Activated B cell treated with CpG ODN at 0.5 μM for 24 hours (primary cell): ENCODE measurements at regions of chr15 and their contacts with region 1.

Region 1: GRCh38 chr15:79184465-79184892 is 93.9 kb upstream of the RASGRF1 start:
- DNase-seq: peak; percentile 51
- ATAC-seq: peak; percentile 56
- H3K4me3 Mint-ChIP-seq: no peak overlapping the region
- H3K27ac Mint-ChIP-seq: no peak overlapping the region
- H3K4me1 Mint-ChIP-seq: no peaks in the 10 kb centered on the region
- H3K27me3 Mint-ChIP-seq: peaks cover 9% of the 10 kb centered on the region
- CTCF ChIP-seq: peak; percentile 90

Region 2: DNA sequence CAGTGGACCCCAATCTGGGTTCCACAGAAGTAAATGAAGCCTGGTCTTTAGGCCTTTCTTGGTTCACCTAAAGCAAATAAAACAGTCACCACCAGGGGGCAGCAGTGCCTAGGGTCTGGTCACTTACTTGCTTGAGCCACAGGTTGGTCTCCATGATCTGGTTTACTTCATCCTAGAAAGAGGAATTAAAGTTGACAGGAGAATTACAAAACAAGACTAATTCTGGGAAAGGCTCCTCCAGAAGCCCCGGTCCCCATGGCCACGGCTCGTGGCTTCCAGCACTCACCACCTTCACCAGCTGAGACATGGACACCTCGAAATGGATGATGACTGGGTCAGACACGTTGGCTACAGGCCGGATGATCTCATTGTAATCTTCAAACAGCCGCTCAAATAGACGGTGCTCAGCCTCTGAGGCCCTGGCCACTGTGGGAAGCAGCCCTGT is 566.0 kb before region 1 on chr15:
- CTCF ChIA-PET with region 1: no interaction called
- POLR2A ChIA-PET with region 1: no interaction called
- intact Hi-C with region 1: loop called (anchors 1 kb)
- DNase-seq: peak; percentile 59
- ATAC-seq: peak; percentile 67
- H3K4me3 Mint-ChIP-seq: no peak overlapping the region
- H3K27ac Mint-ChIP-seq: no peak overlapping the region
- H3K4me1 Mint-ChIP-seq: peaks cover 5% of the 10 kb centered on the region
- H3K27me3 Mint-ChIP-seq: peaks cover 34% of the 10 kb centered on the region
- CTCF ChIP-seq: peak; percentile 45

Region 3: GRCh38 chr15:78761891-78762385 is 422.5 kb before region 1 on chr15:
- CTCF ChIA-PET with region 1: interaction called, 3 read pairs
- POLR2A ChIA-PET with region 1: no interaction called
- intact Hi-C with region 1: loop called (anchors 5 kb)
- DNase-seq: no peak
- ATAC-seq: no peak
- H3K4me3 Mint-ChIP-seq: peak overlapping the region; percentile 46
- H3K27ac Mint-ChIP-seq: peak overlapping the region; percentile 77
- H3K4me1 Mint-ChIP-seq: peaks cover 62% of the 10 kb centered on the region
- H3K27me3 Mint-ChIP-seq: no peaks in the 10 kb centered on the region
- CTCF ChIP-seq: no peak

Region 4: DNA sequence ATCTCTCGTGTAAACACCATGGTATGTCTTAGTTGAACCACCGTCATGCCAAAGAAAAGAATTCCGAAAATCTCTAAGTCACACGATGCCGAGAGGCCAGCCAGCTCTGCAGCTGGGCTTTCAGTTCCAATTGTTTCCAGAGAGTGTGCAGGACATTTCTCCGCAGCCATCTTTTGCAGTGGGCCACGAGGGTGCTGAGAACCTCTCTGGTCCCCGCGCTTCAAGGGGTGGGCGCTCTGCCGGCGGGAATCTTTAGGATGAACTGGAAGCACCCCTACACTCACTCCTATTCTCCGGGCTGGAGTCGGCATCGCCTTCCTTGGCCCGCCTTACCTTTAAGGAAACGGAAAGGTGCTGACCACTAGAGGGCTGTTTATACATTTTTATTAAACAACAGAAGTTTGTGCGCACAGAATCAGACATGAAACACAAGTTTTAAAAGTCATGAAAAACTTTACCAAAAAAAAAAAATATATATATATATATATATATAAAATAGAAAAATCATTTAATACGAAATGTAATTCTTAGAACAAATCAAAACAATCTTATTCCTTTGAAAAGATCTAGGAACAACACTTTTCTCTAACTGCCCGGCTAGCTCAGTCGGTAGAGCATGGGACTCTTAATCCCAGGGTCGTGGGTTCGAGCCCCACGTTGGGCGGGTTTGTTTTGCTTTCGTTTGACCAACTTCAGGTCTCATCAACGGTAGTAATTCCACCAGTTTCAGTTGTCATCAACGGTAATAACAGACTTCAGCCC is 324.3 kb before region 1 on chr15:
- CTCF ChIA-PET with region 1: interaction called, 8 read pairs
- POLR2A ChIA-PET with region 1: no interaction called
- intact Hi-C with region 1: loop called (anchors 1 kb)
- DNase-seq: peak; percentile 53
- ATAC-seq: peak; percentile 91
- H3K4me3 Mint-ChIP-seq: peak overlapping the region; percentile 85
- H3K27ac Mint-ChIP-seq: peak overlapping the region; percentile 84
- H3K4me1 Mint-ChIP-seq: peaks cover 9% of the 10 kb centered on the region
- H3K27me3 Mint-ChIP-seq: no peaks in the 10 kb centered on the region
- CTCF ChIP-seq: no peak

Region 5: GRCh38 chr15:78909791-78910228 is 274.7 kb before region 1 on chr15:
- CTCF ChIA-PET with region 1: interaction called, 143 read pairs
- POLR2A ChIA-PET with region 1: interaction called, 11 read pairs
- intact Hi-C with region 1: loop called (anchors 1 kb)
- DNase-seq: no peak
- ATAC-seq: peak; percentile 75
- H3K4me3 Mint-ChIP-seq: no peak overlapping the region
- H3K27ac Mint-ChIP-seq: peak overlapping the region; percentile 38
- H3K4me1 Mint-ChIP-seq: peaks cover 21% of the 10 kb centered on the region
- H3K27me3 Mint-ChIP-seq: no peaks in the 10 kb centered on the region
- CTCF ChIP-seq: no peak

Region 6: GRCh38 chr15:79101866-79102578 is 82.5 kb before region 1 on chr15:
- CTCF ChIA-PET with region 1: interaction called, 10 read pairs
- POLR2A ChIA-PET with region 1: no interaction called
- intact Hi-C with region 1: no loop called
- DNase-seq: no peak
- ATAC-seq: no peak
- H3K4me3 Mint-ChIP-seq: no peak overlapping the region
- H3K27ac Mint-ChIP-seq: no peak overlapping the region
- H3K4me1 Mint-ChIP-seq: peaks cover 8% of the 10 kb centered on the region
- H3K27me3 Mint-ChIP-seq: peaks cover 28% of the 10 kb centered on the region
- CTCF ChIP-seq: no peak

Region 7: DNA sequence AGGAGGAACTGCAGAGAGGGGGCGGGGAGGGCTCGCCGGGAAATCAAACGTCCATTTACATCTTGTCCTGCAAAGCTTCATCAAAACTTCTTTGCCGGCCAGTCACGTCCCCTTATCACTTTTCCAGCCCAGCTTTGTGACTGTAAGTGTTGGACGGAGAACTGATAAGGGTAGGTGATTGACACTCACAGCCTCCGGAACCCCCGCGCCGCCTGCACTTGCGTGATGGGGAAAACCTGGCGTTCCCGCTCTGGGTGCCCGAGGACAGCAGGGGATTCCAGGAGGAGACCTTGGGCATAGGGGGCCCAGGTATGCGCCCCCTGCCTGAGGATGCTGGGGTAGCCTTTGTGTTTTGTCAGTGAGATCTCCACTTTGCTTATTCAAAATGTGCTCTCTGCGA is 25.2 kb after region 1 on chr15:
- CTCF ChIA-PET with region 1: interaction called, 10 read pairs
- POLR2A ChIA-PET with region 1: no interaction called
- intact Hi-C with region 1: no loop called
- DNase-seq: no peak
- ATAC-seq: no peak
- H3K4me3 Mint-ChIP-seq: no peak overlapping the region
- H3K27ac Mint-ChIP-seq: no peak overlapping the region
- H3K4me1 Mint-ChIP-seq: no peaks in the 10 kb centered on the region
- H3K27me3 Mint-ChIP-seq: peaks cover 58% of the 10 kb centered on the region
- CTCF ChIP-seq: no peak

Region 8: GRCh38 chr15:79450648-79451047 is 266.2 kb after region 1 on chr15:
- CTCF ChIA-PET with region 1: no interaction called
- POLR2A ChIA-PET with region 1: no interaction called
- intact Hi-C with region 1: no loop called
- DNase-seq: no peak
- ATAC-seq: no peak
- H3K4me3 Mint-ChIP-seq: no peak overlapping the region
- H3K27ac Mint-ChIP-seq: no peak overlapping the region
- H3K4me1 Mint-ChIP-seq: no peaks in the 10 kb centered on the region
- H3K27me3 Mint-ChIP-seq: peaks cover 11% of the 10 kb centered on the region
- CTCF ChIP-seq: no peak